ENCODE measurements at regions of chr17 and their contacts with region 1.

Region 1: DNA sequence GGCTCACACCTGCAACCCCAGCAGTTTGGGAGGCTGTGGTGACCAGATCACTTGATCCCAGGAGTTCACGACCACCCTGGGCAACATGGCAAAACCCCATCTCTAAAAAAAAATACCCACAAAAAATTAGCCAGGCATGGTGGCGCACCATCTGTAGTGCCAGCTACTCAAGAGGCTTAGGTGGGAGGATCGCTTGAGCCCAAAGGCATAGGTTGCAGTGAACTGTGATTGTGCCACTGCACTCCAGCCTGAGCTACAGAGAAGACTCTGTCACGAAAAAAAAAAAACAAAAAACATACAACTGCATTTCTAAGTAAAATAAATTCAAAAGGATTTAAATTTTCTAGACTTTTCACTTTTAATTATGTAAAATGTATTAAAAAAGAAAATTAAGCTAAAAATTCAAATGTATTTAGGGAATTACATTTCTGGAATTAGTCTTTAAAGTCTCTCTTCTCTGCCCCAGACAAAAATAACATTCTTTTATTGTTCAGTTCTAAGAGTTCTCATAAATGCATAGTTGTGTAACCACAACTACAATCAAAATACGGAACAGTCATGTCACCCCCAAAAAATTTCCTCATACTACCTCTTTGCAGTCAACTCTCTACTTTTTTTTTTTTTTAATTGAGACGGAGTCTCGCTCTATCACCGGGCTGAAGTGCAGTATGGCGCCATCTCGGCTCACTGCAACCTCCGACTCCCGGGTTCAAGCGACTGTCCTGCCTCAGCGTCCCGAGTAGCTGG is 14.1 kb downstream of the FAM222B start:
- DNase-seq: peak in 1 of 2 donors; percentile 6
- H3K4me3 ChIP-seq: no peak overlapping the region
- H3K27ac ChIP-seq: no peak overlapping the region
- H3K4me1 ChIP-seq: no peaks in the 10 kb centered on the region
- H3K27me3 ChIP-seq: no peaks in the 10 kb centered on the region
- CTCF ChIP-seq: no peak

Region 2: DNA sequence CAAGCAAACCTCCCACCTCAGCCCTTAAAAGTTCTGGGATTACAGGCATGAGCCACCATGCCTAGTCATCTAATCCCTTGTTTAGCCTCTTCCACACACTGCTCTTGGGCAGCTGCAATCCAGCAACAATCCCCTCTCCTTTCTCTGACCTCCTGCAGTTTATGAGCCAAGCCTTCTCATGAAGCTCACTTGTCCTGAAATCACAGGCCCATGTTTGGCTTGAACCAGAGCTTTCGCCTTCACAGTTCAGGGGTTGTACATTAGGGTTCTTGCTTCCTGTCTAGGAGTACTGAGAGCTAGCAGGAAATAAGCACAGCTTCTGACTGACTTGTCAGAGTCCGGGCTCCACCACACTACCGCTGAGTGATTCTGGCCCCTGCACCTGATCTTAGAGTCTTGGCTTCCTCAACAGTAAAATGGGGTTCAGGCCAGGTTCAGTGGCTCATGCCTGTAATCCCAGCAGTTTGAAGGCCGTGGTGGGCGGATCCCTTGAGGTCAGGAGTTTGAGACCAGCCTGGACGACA is 42.7 kb after region 1 on chr17:
- intact Hi-C with region 1: no loop called
- DNase-seq: no peak
- H3K4me3 ChIP-seq: no peak overlapping the region
- H3K27ac ChIP-seq: no peak overlapping the region
- H3K4me1 ChIP-seq: no peaks in the 10 kb centered on the region
- H3K27me3 ChIP-seq: no peaks in the 10 kb centered on the region
- CTCF ChIP-seq: no peak

Region 3: DNA sequence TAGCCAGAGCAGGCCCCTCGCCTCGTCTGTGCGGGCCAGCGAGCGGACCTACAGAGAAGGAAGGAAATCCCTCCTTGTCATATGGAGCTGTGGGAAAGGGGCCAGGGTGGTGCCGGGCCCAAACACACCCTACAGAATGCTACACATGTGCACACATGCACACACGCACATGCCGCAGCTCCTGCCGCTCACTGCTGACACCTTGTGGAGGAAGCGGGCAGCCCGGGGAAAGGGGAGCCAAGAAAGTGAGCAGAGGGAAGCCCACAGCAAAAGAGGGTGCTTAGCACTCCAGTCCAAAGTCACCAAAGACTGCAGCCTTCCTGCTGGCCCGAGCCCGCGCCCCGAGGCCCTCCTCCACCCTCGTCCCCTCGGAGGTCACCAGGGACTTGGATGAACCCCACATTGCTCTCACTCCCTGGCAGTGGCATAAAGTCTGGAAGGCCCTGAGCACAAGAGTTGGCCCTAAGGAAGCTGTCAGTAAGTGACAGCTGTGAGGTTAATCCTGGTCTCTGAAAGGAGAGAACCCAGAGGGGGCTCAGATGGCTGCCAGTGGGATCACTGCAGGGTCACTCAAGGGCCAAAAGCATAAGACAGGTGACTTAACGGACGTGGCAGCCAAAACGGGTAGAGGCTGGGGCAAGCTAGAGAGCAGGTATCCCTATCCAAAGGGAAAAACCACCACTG is 283.5 kb after region 1 on chr17:
- intact Hi-C with region 1: no loop called
- DNase-seq: peak; percentile 43 to 76
- H3K4me3 ChIP-seq: no peak overlapping the region
- H3K27ac ChIP-seq: peak overlapping the region in 1 of 2 donors; percentile 13
- H3K4me1 ChIP-seq: peaks cover 0 to 24% (median 6%) of the 10 kb centered on the region in 4 donors
- H3K27me3 ChIP-seq: no peaks in the 10 kb centered on the region
- CTCF ChIP-seq: peak; percentile 60 to 87

Region 4: DNA sequence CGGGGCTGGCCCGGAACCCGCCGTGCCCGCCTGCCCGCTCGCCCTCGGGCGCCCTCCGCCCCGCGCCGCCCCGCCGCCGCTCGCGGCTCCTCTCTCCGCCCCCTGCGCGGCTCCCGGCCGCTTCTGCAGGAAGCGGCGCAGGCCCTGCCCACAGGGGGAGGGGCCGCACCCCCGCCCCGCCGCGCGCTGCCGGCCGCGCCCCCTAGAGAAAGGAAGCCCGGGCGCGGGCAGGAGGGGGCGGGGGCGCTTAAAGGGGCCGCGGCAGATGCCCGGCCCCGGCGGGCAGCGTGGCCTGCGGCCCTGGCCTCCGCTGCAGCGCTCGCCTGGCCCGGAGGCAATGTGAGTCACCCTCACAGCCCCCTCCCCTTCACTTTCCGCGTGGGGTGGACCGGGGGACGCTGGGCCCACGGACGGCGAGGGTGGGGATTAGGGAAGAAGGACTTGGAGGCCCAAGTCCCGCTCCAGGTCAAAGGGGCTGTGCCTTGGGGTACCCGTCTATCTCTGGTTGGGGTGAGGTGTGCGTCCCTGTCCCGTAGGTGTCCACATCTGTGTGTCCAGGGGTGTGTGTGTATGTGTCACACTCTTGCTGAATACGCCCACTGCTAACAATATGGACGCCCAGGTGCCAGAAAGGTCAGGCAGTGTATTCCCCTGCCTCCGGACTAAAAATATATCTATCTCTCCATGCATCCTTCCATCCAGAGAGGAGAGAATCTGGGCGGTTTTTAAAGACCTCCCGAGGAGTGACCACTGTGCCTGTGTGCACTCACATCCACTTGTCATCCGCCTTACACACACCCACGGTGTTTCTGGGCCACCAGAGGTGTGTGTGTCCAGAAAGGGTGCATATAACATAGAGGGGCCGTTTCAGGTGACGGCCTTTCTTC is 761.3 kb after region 1 on chr17 and contains the start of gene GIT1:
- intact Hi-C with region 1: loop called (anchors 10 kb)
- DNase-seq: peak; percentile 82 to 92
- H3K4me3 ChIP-seq: peak within 1 kb of the TSS; percentile 74 to 93
- H3K27ac ChIP-seq: peak within 1 kb of the TSS; percentile 84 to 86
- H3K4me1 ChIP-seq: peaks cover 0 to 76% (median 70%) of the 10 kb centered on the region in 4 donors
- H3K27me3 ChIP-seq: no peaks in the 10 kb centered on the region
- CTCF ChIP-seq: peak in 1 of 2 experiments; percentile 14

Measured in tibial artery (tissue), 4 donors.